WTC11 (cell line): ENCODE measurements at regions of chr15 and their contacts with region 1.

Region 1: DNA sequence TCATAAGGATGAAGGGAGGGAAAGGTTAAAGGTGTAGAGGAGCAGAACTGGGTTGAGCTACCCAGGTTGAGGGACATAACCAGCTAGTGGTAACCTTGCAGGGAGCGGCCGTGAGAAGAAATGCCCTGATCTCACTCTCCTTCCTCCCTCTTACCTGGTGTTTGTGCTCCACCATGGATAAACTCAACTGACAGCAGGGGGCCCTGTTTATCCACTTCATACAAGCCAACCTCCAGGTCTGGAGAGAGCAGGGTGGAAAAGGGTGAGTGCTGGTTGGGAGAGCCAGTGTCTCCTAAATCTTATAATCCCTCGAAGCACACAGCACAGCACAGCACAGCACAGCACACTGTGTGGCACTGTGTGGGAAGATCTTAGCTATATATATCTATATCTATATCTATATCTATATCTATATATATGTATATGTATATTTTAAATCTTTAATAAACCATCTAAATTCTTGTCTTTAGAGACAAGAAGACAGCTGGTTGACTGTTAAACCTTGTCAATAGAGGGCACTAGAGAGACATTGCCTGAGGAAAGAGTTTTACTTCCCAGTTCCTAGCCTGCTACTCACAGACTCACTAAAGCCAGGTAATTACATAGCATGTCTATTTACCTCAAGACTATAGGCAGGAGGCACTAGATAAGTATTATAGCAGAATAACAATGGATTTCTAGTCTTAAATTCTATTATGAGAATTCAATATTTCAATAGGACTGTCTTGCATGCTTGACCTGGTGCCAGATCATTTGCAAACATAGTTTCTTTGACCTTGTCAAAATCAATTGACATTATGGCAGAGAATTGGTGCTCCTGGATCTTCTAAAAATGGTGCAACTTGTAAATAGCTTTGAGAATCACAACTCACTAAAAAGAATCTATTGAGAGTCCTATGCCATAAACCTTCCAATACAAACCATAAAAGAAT is 21.7 kb upstream of the FMN1 start:
- DNase-seq: no peak
- ATAC-seq: peak; percentile 65
- H3K4me3 Mint-ChIP-seq: no peak overlapping the region
- H3K27ac Mint-ChIP-seq: no peak overlapping the region
- H3K4me1 Mint-ChIP-seq: no peaks in the 10 kb centered on the region; the same call in 1 of the 2 replicates
- H3K27me3 Mint-ChIP-seq: no peaks in the 10 kb centered on the region
- CTCF ChIP-seq: 0 out of 2 replicates have a peak, but pooled peaks have one; percentile 22

Region 2: GRCh38 chr15:33138000-33138399 is 78.2 kb before region 1 on chr15:
- CTCF ChIA-PET with region 1: no interaction called
- POLR2A ChIA-PET with region 1: no interaction called
- DNase-seq: no peak
- ATAC-seq: no peak
- H3K4me3 Mint-ChIP-seq: no peak overlapping the region
- H3K27ac Mint-ChIP-seq: no peak overlapping the region
- H3K4me1 Mint-ChIP-seq: peaks cover under 1% of the 10 kb centered on the region
- H3K27me3 Mint-ChIP-seq: no peaks in the 10 kb centered on the region
- CTCF ChIP-seq: no peak

Region 3: DNA sequence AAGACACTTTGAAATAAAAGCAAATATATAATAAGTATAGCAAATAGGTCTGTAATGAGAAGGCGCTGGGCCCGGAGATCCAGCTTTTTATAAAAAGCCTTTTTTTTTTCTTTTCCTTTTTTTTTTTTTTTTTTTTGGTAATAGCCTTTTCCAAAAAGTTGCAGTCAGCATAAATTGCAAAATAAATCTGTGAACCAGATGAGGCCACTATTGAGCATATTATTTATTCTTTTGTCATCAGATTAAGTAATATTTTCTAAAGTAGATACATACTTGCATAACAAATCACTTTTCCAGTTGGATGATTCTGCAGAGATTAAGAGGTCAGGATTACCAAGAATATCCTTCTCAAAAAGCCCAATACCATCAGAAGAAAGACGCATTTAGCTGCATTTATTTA is 46.6 kb before region 1 on chr15:
- CTCF ChIA-PET with region 1: no interaction called
- POLR2A ChIA-PET with region 1: no interaction called
- DNase-seq: no peak
- ATAC-seq: no peak
- H3K4me3 Mint-ChIP-seq: no peak overlapping the region
- H3K27ac Mint-ChIP-seq: no peak overlapping the region
- H3K4me1 Mint-ChIP-seq: no peaks in the 10 kb centered on the region
- H3K27me3 Mint-ChIP-seq: no peaks in the 10 kb centered on the region
- CTCF ChIP-seq: no peak

Region 4: GRCh38 chr15:33194704-33195670 is 21.2 kb before region 1 on chr15 and contains the start of gene FMN1:
- CTCF ChIA-PET with region 1: interaction called, 25 read pairs
- POLR2A ChIA-PET with region 1: no interaction called
- DNase-seq: peak; percentile 98
- ATAC-seq: peak; percentile 99
- H3K4me3 Mint-ChIP-seq: peak within 1 kb of the TSS; percentile 85
- H3K27ac Mint-ChIP-seq: peak within 1 kb of the TSS; percentile 41; the same call in 1 of the 2 replicates
- H3K4me1 Mint-ChIP-seq: peaks cover 24% of the 10 kb centered on the region
- H3K27me3 Mint-ChIP-seq: peaks cover 32% of the 10 kb centered on the region
- CTCF ChIP-seq: no peak
- total RNA-seq, gene FMN1: 3.6 to 4.5 TPM (median 4.1 TPM) in 3 replicates

Region 5: GRCh38 chr15:33201491-33202231 is 14.5 kb before region 1 on chr15:
- CTCF ChIA-PET with region 1: interaction called, 25 read pairs
- POLR2A ChIA-PET with region 1: no interaction called
- DNase-seq: peak; percentile 49
- ATAC-seq: peak; percentile 93
- H3K4me3 Mint-ChIP-seq: no peak overlapping the region
- H3K27ac Mint-ChIP-seq: no peak overlapping the region
- H3K4me1 Mint-ChIP-seq: peaks cover 31% of the 10 kb centered on the region
- H3K27me3 Mint-ChIP-seq: no peaks in the 10 kb centered on the region; the same call in 1 of the 2 replicates
- CTCF ChIP-seq: no peak